B cell (primary cell): ENCODE measurements at regions of chr2 and their contacts with region 1.

Region 1: GRCh38 chr2:64644177-64645004 is 9.3 kb downstream of the SERTAD2 start:
- DNase-seq: peak; percentile 74
- ATAC-seq: peak; percentile 37
- H3K4me3 ChIP-seq: peak overlapping the region; percentile 21 to 50 (median 29)
- H3K4me3 Mint-ChIP-seq: peak overlapping the region; percentile 89
- H3K27ac ChIP-seq: peak overlapping the region; percentile 66 to 81
- H3K27ac Mint-ChIP-seq: peak overlapping the region; percentile 97
- H3K4me1 ChIP-seq: peaks cover 78 to 88% of the 10 kb centered on the region in 2 donors
- H3K4me1 Mint-ChIP-seq: peaks cover 89% of the 10 kb centered on the region
- H3K27me3 ChIP-seq: no peaks in the 10 kb centered on the region
- H3K27me3 Mint-ChIP-seq: no peaks in the 10 kb centered on the region
- CTCF ChIP-seq: no peak

Region 2: DNA sequence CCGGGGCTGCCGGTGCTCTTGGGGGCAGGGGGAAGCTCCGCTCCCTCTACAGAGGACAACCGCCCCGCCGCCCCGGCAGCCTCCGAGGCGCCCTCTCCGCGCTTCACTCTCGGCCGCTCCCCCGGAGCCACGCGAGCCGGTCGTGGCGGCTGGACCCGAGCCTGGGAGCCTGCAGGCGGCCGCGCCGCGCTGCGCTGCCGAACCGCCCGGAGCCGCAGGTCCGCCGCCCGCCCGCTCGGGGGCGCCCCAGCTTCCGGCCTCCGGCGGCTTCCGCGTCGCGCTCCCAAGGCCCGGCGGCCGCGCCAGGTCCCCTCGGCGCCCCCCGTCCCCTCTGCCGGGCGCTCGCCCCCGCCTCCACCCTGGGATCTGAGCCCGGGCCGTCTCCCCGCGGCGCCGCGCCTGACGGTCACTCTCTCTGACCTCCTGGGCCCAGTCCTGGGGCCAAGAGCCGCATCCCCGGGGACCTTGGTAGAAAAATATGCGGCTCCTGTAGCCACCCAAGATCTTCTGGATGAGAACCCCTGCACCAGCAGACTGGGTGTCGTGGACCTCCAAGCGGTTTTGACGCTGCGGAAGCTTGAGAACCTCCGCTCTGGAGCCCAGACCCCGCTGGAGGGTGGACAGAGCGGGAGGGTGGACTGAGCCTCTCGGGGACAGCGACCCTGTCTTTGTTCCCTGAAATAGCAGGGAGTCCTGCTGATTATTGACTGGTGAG is 35.0 kb before region 1 on chr2:
- CTCF ChIA-PET with region 1: interaction called, 70 read pairs
- POLR2A ChIA-PET with region 1: interaction called, 8 read pairs
- intact Hi-C with region 1: loop called (anchors 1 kb)
- DNase-seq: peak; percentile 86
- ATAC-seq: peak; percentile 72
- H3K4me3 ChIP-seq: peak overlapping the region; percentile 51 to 77 (median 64)
- H3K4me3 Mint-ChIP-seq: peak overlapping the region; percentile 78
- H3K27ac ChIP-seq: peak overlapping the region; percentile 53 to 84
- H3K27ac Mint-ChIP-seq: peak overlapping the region; percentile 78
- H3K4me1 ChIP-seq: peaks cover 22 to 34% of the 10 kb centered on the region in 2 donors
- H3K4me1 Mint-ChIP-seq: peaks cover 29% of the 10 kb centered on the region
- H3K27me3 ChIP-seq: no peaks in the 10 kb centered on the region
- H3K27me3 Mint-ChIP-seq: no peaks in the 10 kb centered on the region
- CTCF ChIP-seq: peak; percentile 53

Region 3: DNA sequence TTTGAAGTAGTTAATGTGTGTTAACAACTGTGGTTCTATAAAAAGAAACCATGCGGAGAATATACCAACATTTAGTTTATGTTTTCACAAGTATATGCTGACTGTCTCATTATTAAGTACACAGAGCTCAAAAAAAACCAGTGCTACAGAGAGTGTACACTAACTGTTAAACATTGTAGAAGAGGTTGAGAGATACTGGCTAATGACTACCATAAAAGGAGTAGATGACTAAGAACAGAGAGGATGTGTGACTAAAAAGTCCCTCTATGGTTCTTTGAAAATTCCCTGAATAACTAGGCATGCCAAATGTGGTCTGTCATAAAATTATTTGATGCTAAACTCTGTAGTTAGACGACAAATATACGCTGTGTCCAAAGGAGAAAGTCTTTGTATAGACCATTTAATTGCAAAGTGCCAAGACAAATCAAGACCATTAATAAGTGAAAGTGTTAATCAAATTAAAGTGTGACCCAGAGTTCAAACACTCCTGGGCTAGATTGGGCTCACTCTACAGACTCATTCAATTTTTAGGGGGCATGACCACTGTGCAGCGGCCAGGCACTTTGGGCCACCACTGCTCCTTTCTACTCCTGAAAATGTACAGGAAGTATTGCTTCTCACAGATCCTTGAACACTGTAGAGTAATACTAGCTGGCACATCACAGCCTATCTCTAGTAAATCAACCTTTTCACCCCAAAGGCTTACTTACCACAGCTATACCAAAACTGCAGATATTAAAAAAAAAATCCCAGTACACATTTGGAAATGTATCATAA is 54.5 kb after region 1 on chr2:
- CTCF ChIA-PET with region 1: interaction called, 12 read pairs
- POLR2A ChIA-PET with region 1: no interaction called
- intact Hi-C with region 1: loop called (anchors 2 kb)
- DNase-seq: peak; percentile 27
- ATAC-seq: peak; percentile 51
- H3K4me3 ChIP-seq: peak overlapping the region in 1 of 5 experiments; percentile 36
- H3K4me3 Mint-ChIP-seq: peak overlapping the region; percentile 37
- H3K27ac ChIP-seq: no peak overlapping the region
- H3K27ac Mint-ChIP-seq: peak overlapping the region; percentile 51
- H3K4me1 ChIP-seq: peaks cover 22 to 24% of the 10 kb centered on the region in 2 donors
- H3K4me1 Mint-ChIP-seq: peaks cover 40% of the 10 kb centered on the region
- H3K27me3 ChIP-seq: no peaks in the 10 kb centered on the region
- H3K27me3 Mint-ChIP-seq: no peaks in the 10 kb centered on the region
- CTCF ChIP-seq: no peak

Region 4: DNA sequence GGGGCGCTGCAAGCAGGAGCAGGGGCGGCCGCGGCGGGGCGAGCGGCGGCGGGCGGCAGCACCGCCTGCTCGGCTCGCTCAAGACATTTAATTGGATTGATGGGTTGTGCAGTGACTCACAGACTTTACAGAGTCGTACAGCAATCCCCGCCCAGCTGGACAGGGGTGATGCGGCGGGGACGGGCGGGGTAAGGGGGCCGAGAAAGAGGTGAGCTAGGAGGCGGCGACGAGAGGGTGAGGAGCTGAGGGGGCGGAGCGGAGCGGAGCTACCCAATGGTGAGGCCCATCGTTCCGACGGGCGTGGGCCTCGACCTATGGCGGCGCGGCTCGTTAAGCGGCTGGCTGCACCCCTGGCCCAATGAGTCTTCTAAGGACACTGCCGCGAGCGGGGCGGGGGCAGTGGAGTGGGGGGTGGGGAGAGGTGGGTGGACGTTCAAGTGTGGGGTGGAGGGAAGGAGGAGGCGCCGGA is 106.5 kb after region 1 on chr2:
- CTCF ChIA-PET with region 1: interaction called, 121 read pairs
- POLR2A ChIA-PET with region 1: interaction called, 14 read pairs
- intact Hi-C with region 1: loop called (anchors 1 kb)
- DNase-seq: peak; percentile 99
- ATAC-seq: peak; percentile 81
- H3K4me3 ChIP-seq: peak overlapping the region; percentile 75 to 99 (median 93)
- H3K4me3 Mint-ChIP-seq: peak overlapping the region; percentile 91
- H3K27ac ChIP-seq: peak overlapping the region; percentile 83 to 88
- H3K27ac Mint-ChIP-seq: peak overlapping the region; percentile 98
- H3K4me1 ChIP-seq: peaks cover 18 to 19% of the 10 kb centered on the region in 2 donors
- H3K4me1 Mint-ChIP-seq: peaks cover 28% of the 10 kb centered on the region
- H3K27me3 ChIP-seq: no peaks in the 10 kb centered on the region
- H3K27me3 Mint-ChIP-seq: no peaks in the 10 kb centered on the region
- CTCF ChIP-seq: no peak

Region 5: DNA sequence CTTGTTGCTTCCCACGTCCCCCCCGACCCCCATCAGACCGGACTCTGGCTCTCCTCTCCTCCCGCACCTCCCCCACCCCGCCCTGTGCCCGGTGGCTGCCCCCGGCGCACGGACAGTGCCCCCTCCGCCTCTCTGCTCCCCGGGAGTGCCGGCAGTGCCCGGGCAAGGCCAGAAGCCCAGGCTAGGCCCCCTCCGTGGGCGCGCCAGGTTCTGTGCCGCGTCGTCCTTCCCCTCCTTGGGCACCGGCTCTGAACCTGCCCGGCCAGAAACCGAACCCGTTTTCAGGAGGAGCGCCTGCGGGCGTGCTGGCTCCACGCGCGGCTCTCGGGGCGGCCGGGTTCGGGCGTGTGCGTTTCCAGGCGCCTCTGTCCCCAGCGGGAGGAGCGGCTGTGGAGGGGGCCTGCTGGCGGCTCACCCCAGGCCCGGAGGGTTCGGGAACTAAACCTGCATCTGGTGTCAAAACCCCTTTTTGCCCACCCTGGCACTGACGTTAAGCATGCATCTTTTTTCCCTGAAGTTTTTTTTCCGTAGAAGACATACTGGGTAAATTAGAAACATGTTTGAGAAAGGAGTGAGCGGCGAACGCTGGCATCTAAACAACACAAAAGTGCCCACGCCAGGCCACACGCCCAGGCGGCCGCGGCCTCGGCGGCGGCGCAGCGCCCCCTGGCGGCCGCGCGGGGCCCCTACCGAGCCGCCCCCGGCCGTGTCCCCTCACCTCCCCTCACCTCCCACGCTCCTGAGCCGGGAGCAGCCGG is 220.9 kb after region 1 on chr2:
- CTCF ChIA-PET with region 1: interaction called, 138 read pairs
- POLR2A ChIA-PET with region 1: interaction called, 14 read pairs
- intact Hi-C with region 1: loop called (anchors 1 kb)
- DNase-seq: peak; percentile 86
- ATAC-seq: peak; percentile 54
- H3K4me3 ChIP-seq: peak overlapping the region; percentile 46 to 88 (median 64)
- H3K4me3 Mint-ChIP-seq: no peak overlapping the region
- H3K27ac ChIP-seq: peak overlapping the region; percentile 91 to 93
- H3K27ac Mint-ChIP-seq: peak overlapping the region; percentile 53
- H3K4me1 ChIP-seq: peaks cover 49 to 60% of the 10 kb centered on the region in 2 donors
- H3K4me1 Mint-ChIP-seq: peaks cover 1% of the 10 kb centered on the region
- H3K27me3 ChIP-seq: no peaks in the 10 kb centered on the region
- H3K27me3 Mint-ChIP-seq: no peaks in the 10 kb centered on the region
- CTCF ChIP-seq: peak; percentile 85

Region 6: DNA sequence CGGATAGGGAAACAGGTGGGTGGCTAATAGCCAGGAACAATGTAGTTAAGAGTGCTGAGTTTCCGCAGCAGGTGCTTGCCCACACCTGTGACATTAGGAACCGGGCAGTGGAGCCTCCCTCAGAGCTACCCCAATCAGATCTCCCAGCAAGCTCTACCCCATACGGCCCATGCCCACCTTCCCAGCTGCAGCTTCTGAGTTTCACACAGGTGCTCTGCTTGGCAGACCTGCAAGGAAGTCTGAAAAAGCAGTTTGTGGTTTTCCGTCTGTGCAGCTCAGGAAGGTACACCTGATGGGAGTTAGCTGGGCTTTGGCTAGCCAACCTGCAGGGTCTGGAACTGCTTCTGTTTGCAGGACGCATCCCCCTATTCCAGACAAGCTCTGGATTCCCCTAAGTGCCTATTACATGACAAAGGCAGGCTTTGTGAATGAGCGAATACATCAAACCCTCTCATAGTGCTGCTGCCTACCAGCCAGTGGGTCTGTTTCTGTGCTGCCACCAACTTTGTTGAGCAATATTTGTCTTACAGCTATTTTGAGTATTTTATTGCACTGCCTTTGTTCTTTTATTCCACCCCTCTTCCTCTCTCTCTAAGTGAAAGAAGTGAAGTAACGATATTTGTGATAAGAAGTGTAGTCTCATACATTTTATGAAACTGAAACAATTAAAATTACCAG is 387.1 kb after region 1 on chr2:
- CTCF ChIA-PET with region 1: interaction called, 4 read pairs
- POLR2A ChIA-PET with region 1: interaction called, 11 read pairs
- intact Hi-C with region 1: loop called (anchors 5 kb)
- DNase-seq: peak; percentile 68
- ATAC-seq: peak; percentile 12
- H3K4me3 ChIP-seq: peak overlapping the region; percentile 9 to 63 (median 44)
- H3K4me3 Mint-ChIP-seq: peak overlapping the region; percentile 89
- H3K27ac ChIP-seq: peak overlapping the region; percentile 67 to 87
- H3K27ac Mint-ChIP-seq: peak overlapping the region; percentile 87
- H3K4me1 ChIP-seq: peaks cover 60 to 71% of the 10 kb centered on the region in 2 donors
- H3K4me1 Mint-ChIP-seq: peaks cover 65% of the 10 kb centered on the region
- H3K27me3 ChIP-seq: no peaks in the 10 kb centered on the region
- H3K27me3 Mint-ChIP-seq: no peaks in the 10 kb centered on the region
- CTCF ChIP-seq: no peak